ENCODE measurements at regions of chr17 and their contacts with region 1.

Region 1: GRCh38 chr17:6913608-6914443 is 82.0 kb upstream of the ALOX12 start:
- DNase-seq: peak; percentile 16
- H3K4me3 Mint-ChIP-seq: no peak overlapping the region
- H3K27ac Mint-ChIP-seq: no peak overlapping the region
- H3K4me1 Mint-ChIP-seq: no peaks in the 10 kb centered on the region
- H3K27me3 Mint-ChIP-seq: no peaks in the 10 kb centered on the region
- CTCF ChIP-seq: peak; percentile 51

Region 2: DNA sequence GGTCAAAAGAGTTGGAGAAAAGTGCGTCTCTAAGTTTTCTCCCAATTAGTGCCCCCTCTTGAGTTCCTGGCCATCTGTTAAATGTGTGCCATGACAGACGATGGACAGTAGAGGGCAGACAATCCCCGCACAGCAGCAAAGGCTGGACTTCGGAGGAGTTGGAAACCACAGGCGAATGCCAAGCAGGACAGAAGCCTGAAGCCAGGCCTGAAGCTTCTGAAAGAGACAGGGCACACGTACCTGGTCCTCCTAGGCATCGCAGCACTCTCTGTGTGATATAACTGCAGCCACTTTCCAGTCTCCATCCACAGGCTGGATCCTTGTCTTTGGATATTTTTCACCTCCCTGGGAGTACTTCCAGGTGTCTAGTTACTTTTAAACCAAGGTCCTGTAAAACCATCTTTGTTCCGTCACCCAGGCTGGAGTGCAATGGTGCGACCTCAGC is 247.7 kb before region 1 on chr17:
- CTCF ChIA-PET with region 1: interaction called, 8 read pairs
- POLR2A ChIA-PET with region 1: no interaction called
- intact Hi-C with region 1: loop called (anchors 1 kb)
- DNase-seq: peak; percentile 86
- H3K4me3 Mint-ChIP-seq: no peak overlapping the region
- H3K27ac Mint-ChIP-seq: no peak overlapping the region
- H3K4me1 Mint-ChIP-seq: peaks cover 30% of the 10 kb centered on the region
- H3K27me3 Mint-ChIP-seq: peaks cover 5% of the 10 kb centered on the region
- CTCF ChIP-seq: peak; percentile 93

Region 3: GRCh38 chr17:6780886-6781285 is 132.9 kb before region 1 on chr17:
- CTCF ChIA-PET with region 1: no interaction called
- POLR2A ChIA-PET with region 1: no interaction called
- intact Hi-C with region 1: no loop called
- DNase-seq: no peak
- H3K4me3 Mint-ChIP-seq: no peak overlapping the region
- H3K27ac Mint-ChIP-seq: no peak overlapping the region
- H3K4me1 Mint-ChIP-seq: peaks cover 6% of the 10 kb centered on the region
- H3K27me3 Mint-ChIP-seq: no peaks in the 10 kb centered on the region
- CTCF ChIP-seq: no peak

Region 4: GRCh38 chr17:6853764-6854442 is 59.9 kb before region 1 on chr17:
- CTCF ChIA-PET with region 1: interaction called, 11 read pairs
- POLR2A ChIA-PET with region 1: no interaction called
- intact Hi-C with region 1: no loop called
- DNase-seq: peak; percentile 71
- H3K4me3 Mint-ChIP-seq: peak overlapping the region; percentile 86
- H3K27ac Mint-ChIP-seq: peak overlapping the region; percentile 94
- H3K4me1 Mint-ChIP-seq: peaks cover 14% of the 10 kb centered on the region
- H3K27me3 Mint-ChIP-seq: no peaks in the 10 kb centered on the region
- CTCF ChIP-seq: peak; percentile 52

Region 5: GRCh38 chr17:6927290-6928126 is 13.7 kb after region 1 on chr17:
- CTCF ChIA-PET with region 1: interaction called, 13 read pairs
- POLR2A ChIA-PET with region 1: interaction called, 3 read pairs
- intact Hi-C with region 1: no loop called
- DNase-seq: peak; percentile 73
- H3K4me3 Mint-ChIP-seq: no peak overlapping the region
- H3K27ac Mint-ChIP-seq: peak overlapping the region; percentile 51
- H3K4me1 Mint-ChIP-seq: peaks cover 16% of the 10 kb centered on the region
- H3K27me3 Mint-ChIP-seq: no peaks in the 10 kb centered on the region
- CTCF ChIP-seq: no peak